Calu3 (cell line): ENCODE measurements at regions of chr5 and their contacts with region 1.

Region 1: GRCh38 chr5:52709171-52709925 is 78.4 kb upstream of the ITGA1 start:
- DNase-seq: peak; percentile 16
- H3K4me3 Mint-ChIP-seq: peak overlapping the region; percentile 17
- H3K27ac Mint-ChIP-seq: peak overlapping the region; percentile 51
- H3K4me1 Mint-ChIP-seq: peaks cover 42% of the 10 kb centered on the region
- H3K27me3 Mint-ChIP-seq: no peaks in the 10 kb centered on the region
- CTCF ChIP-seq: no peak

Region 2: DNA sequence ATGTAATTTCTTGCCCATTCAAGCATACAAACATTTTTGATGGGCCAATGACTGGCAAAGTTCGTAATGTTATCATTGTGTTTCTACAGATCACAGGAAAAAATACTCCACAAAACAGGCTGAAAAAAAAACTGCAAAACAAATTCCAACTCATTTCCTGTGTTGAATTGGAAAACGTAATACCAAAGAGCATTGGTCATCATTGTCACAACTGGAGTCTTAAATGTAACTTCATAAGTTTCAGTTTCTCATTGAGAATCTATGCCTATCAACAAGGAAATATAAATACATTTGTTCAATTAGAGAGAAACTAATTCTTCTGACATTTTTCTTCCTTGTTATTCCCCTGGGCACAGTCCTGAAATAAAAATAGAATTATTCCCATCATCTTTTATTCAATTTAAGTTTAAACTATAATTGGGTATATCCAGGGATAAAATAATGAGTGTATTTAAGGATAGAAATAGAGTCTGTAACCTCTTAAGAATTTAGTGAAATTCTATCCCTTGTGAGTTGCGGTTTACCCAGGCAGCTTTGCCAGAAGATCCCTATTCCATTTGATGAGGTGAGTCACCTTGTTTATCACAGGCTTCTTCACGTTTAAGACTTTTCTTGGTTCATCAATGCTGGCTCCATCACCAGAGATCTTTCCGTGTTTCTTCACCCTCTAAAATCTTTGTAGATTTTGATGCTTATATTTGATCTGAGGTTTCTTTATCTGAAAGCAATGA is 34.4 kb before region 1 on chr5:
- CTCF ChIA-PET with region 1: no interaction called
- intact Hi-C with region 1: no loop called
- DNase-seq: no peak
- H3K4me3 Mint-ChIP-seq: no peak overlapping the region
- H3K27ac Mint-ChIP-seq: no peak overlapping the region
- H3K4me1 Mint-ChIP-seq: peaks cover 9% of the 10 kb centered on the region
- H3K27me3 Mint-ChIP-seq: no peaks in the 10 kb centered on the region
- CTCF ChIP-seq: no peak

Region 3: DNA sequence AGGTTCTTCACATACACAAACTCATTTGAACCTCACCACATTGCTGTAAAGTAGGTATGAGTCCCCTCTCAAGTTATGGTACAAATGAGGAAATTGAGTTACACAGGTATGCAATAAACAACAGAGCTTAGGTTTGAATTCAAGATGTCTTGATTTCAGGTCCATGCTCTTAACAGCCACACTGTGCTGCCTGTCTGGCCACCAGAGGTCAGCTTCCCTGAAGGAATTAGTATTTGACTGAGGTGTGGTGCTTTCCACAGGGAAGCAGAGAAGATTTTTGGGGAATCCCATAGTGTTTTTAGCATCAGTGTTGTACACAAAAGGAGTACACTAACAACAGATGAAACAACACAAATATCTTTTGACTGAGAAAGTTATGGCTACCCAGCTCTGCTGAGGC is 16.1 kb before region 1 on chr5:
- CTCF ChIA-PET with region 1: interaction called, 12 read pairs
- intact Hi-C with region 1: no loop called
- DNase-seq: peak; percentile 53
- H3K4me3 Mint-ChIP-seq: no peak overlapping the region
- H3K27ac Mint-ChIP-seq: no peak overlapping the region
- H3K4me1 Mint-ChIP-seq: peaks cover 30% of the 10 kb centered on the region
- H3K27me3 Mint-ChIP-seq: peaks cover 8% of the 10 kb centered on the region
- CTCF ChIP-seq: peak; percentile 37

Region 4: DNA sequence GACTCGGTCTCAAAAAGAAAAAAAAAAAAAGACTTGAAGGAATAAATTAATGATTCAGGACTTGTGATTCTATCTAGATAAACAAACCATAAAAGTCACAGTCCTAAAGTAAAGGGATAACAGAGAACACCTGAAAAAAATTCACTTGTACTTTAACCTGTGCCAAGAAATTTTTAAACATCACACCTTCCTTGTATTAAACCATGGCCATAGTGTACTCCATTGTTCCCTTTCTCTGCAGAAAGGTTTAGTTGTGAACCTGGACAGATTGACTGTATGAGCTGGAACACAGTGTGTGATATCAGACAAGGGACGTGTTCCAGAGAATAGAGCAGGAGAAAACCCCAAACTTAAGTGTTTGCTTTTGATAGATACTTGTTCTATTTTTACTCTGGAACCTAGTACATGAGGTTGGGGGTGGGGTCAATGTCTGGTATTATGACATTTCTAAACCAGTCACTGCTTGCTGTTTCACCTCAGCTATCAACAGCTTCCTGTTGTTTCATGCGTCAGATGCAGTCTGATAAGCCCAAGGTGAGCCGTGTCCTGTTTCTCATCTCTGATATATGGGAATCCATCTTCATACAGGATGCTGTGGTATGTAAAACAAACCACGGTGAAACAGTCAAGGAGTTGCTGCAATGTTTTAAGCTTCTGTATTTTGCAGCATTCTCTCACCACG is 15.9 kb after region 1 on chr5:
- CTCF ChIA-PET with region 1: interaction called, 3 read pairs
- intact Hi-C with region 1: loop called (anchors 2 kb)
- DNase-seq: peak; percentile 54
- H3K4me3 Mint-ChIP-seq: no peak overlapping the region
- H3K27ac Mint-ChIP-seq: peak overlapping the region; percentile 15
- H3K4me1 Mint-ChIP-seq: peaks cover 30% of the 10 kb centered on the region
- H3K27me3 Mint-ChIP-seq: no peaks in the 10 kb centered on the region
- CTCF ChIP-seq: no peak

Region 5: DNA sequence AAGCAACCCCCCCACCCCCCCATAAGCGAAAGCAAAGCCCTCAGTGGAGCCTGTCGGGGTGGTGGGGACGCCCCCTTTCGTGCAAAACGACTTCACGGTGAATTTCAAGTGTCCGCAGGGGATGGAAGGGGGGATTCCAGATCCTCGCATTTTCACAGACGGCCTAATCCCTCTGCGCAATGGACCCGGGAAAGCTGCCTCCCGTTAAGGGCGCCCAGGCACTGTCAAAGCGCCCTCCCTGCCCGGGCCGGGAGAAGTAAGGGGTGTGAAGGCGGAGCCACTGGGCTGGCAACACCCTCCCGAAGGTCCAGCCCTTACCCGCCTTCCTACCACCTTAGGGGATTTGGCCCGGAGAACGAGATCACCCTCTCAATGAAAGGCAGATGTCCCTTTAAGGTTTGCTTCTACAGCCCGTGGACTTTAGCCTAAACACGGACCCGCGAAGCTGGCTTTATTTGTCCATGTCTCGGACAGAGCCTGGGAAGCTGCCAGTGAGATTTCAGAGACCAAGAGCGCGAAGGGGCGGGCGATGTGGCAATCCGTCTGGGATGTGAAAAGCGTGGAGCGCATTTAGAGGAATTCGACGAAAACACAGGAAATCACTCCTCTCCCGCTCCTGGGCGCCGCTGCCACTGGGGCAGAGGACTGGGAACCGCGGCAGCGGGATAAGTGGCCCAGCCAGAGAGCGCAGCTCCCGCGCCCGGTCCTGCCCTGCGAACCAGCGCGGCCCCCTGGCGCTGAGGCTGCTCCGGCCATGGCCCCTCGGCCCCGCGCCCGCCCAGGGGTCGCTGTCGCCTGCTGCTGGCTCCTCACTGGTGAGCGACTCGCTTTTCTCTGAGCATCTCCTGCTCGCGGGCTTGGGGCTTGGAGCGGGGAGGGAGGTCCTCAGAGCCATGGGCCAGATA is 78.5 kb after region 1 on chr5 and contains the starts of genes ITGA1 and PELO:
- CTCF ChIA-PET with region 1: no interaction called
- intact Hi-C with region 1: loop called (anchors 2 kb)
- DNase-seq: peak; percentile 77
- H3K4me3 Mint-ChIP-seq: peak within 1 kb of the TSS; percentile 90
- H3K27ac Mint-ChIP-seq: peak within 1 kb of the TSS; percentile 73
- H3K4me1 Mint-ChIP-seq: peaks cover 47% of the 10 kb centered on the region
- H3K27me3 Mint-ChIP-seq: no peaks in the 10 kb centered on the region
- CTCF ChIP-seq: no peak
- total RNA-seq, gene ITGA1: 18.9 and 20.2 TPM in 2 replicates
- total RNA-seq, gene PELO: 24.6 and 26.4 TPM in 2 replicates

Region 6: DNA sequence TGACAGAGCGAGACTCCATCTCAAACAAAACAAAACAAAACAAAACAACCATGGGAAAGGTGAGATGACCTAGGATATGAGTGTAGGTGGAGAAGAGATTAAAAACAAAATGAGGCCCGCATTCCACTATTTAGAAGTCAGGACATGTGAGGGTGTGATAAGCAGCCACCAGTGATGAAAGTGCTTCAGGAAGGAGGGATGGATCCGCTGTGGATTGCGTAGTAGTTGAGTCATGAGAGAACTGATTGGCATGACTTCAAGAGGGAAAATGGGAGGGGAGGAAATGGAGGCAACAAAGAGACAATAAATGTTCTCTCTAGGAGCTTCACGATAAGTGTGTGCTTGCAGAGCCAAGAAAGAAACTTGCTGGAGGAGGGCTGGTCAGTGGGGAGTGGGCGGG is 1233.4 kb after region 1 on chr5:
- CTCF ChIA-PET with region 1: no interaction called
- intact Hi-C with region 1: no loop called
- DNase-seq: no peak
- H3K4me3 Mint-ChIP-seq: no peak overlapping the region
- H3K27ac Mint-ChIP-seq: no peak overlapping the region
- H3K4me1 Mint-ChIP-seq: no peaks in the 10 kb centered on the region
- H3K27me3 Mint-ChIP-seq: no peaks in the 10 kb centered on the region
- CTCF ChIP-seq: no peak